CD4-positive, alpha-beta T cell (primary cell): ENCODE measurements at regions of chr22 and their contacts with region 1.

Region 1: DNA sequence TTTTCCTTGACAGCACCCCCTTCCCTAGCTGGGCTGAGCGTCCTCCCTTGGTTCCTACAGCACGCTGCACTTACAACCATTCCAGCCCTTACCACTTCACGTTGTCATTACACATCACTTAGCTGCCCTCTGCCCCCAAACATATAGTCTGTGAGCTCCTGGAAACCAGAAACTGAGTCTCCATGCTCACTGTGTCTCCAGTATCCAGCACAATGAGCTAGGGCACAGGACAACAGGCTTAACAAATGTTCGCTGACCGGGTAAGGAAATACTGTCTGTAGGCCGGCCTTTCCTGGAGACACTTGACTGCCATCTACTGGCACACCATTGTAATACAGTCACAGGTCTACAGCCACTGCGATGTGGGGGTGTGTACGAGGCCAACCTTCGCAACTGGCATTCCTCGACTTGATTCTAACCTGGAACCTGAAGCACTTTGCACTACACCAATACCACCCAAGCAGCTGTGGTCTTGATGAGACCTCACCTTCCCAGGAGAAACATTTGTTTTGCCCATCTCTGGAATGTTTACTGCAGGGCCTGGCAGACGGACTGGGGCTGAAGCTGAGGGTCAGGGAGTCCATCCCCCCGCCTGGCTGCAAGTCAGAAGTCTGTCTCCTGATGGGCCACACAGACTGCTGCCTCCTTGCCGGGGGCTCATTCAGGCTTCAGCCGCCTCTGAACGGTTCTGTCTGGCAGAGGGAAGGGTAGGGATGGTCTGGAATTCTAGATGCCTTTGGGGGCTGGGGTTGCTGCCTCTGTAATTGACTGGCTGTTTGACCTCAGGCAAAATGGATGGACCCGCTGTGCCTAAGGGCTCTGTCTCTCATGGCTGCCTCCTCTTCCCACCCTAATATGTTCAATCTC is 72.0 kb downstream of the SYN3 start:
- DNase-seq: peak in 13 of 14 experiments; percentile 1 to 59 (median 13)
- ATAC-seq: no peak
- H3K4me3 ChIP-seq: no peak overlapping the region
- H3K4me3 Mint-ChIP-seq: no peak overlapping the region
- H3K27ac ChIP-seq: no peak overlapping the region
- H3K27ac Mint-ChIP-seq: no peak overlapping the region
- H3K4me1 ChIP-seq: peaks cover 5% of the 10 kb centered on the region
- H3K4me1 Mint-ChIP-seq: no peaks in the 10 kb centered on the region
- H3K27me3 ChIP-seq: peaks cover 0 to 3% of the 10 kb centered on the region in 2 experiments
- H3K27me3 Mint-ChIP-seq: peaks cover 4% of the 10 kb centered on the region
- CTCF ChIP-seq: peak; percentile 55

Region 2: GRCh38 chr22:32836280-32837123 is 149.6 kb before region 1 on chr22:
- CTCF ChIA-PET with region 1: no interaction called
- POLR2A ChIA-PET with region 1: no interaction called
- intact Hi-C with region 1: loop called in 1 of 2 experiments (anchors 5 kb)
- DNase-seq: peak in 2 of 14 experiments; percentile 9 to 10
- ATAC-seq: no peak
- H3K4me3 ChIP-seq: no peak overlapping the region
- H3K4me3 Mint-ChIP-seq: no peak overlapping the region
- H3K27ac ChIP-seq: no peak overlapping the region
- H3K27ac Mint-ChIP-seq: no peak overlapping the region
- H3K4me1 ChIP-seq: no peaks in the 10 kb centered on the region
- H3K4me1 Mint-ChIP-seq: peaks cover 7% of the 10 kb centered on the region
- H3K27me3 ChIP-seq: no peaks in the 10 kb centered on the region
- H3K27me3 Mint-ChIP-seq: no peaks in the 10 kb centered on the region
- CTCF ChIP-seq: peak; percentile 54

Region 3: DNA sequence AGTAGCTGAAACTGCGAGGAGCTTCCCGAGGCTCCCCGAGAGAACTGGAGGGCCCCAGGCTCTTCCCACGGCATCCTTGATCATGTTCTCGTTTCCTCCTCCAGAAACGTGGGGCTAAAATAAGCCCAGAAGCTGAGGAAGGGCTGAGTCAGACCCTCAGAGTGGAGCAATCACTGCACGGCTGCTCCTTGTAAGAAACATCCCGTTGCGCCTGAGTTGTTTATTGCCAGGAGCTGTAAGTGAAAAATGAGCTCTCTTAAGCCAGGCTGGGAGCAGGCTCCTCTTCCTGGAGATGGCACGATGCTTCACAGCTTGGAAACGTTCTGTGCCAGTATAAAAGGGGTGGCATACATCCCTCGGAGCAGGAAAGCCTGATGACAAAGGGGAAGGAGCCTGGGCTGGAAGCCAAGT is 119.4 kb after region 1 on chr22:
- CTCF ChIA-PET with region 1: no interaction called
- POLR2A ChIA-PET with region 1: no interaction called
- intact Hi-C with region 1: no loop called
- DNase-seq: no peak
- ATAC-seq: no peak
- H3K4me3 ChIP-seq: no peak overlapping the region
- H3K4me3 Mint-ChIP-seq: no peak overlapping the region
- H3K27ac ChIP-seq: no peak overlapping the region
- H3K27ac Mint-ChIP-seq: no peak overlapping the region
- H3K4me1 ChIP-seq: no peaks in the 10 kb centered on the region
- H3K4me1 Mint-ChIP-seq: no peaks in the 10 kb centered on the region
- H3K27me3 ChIP-seq: no peaks in the 10 kb centered on the region
- H3K27me3 Mint-ChIP-seq: peaks cover 26% of the 10 kb centered on the region
- CTCF ChIP-seq: no peak